Naive thymus-derived CD4-positive, alpha-beta T cell (primary cell): ENCODE measurements at regions of chr5 and their contacts with region 1.

Region 1: DNA sequence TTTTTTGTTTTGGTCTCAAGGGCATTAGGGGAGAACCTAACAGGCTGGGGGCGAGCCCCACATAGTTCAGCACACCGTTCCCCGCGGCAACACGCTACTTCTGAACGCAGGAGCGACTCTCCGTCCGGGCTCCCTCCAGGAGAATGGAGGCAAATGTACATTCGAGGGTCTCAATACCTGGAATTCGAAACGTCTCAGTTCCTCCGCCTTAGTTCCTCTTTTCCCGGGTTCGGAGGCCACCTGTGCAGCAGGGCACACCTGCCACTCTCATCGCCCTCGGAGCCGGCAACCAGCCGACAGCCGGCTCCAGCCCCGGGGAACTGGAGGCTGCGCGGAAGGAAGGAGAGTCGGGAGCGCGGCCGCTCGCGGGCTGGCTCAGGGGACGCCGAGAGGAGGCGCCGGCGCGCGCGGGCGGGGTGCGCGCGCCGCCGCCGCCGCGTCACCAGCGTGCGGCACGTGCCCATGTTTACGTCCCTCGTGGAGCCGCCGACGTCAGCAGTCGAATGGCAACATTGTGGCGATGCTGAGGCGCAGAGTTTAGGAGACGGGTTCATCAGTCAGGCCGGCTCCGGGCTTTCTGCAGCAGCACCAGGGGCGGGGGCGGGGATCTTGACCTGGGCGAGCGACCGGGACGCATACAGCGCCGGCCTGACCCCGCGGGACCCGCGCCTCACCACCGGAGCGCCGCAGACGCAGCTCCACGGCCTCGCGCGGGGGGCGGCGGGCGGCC is at the start of gene JMY:
- DNase-seq: peak; percentile 73 to 89 (median 84)
- ATAC-seq: peak; percentile 89
- H3K4me3 ChIP-seq: peak within 1 kb of the TSS; percentile 95
- H3K4me3 Mint-ChIP-seq: peak within 1 kb of the TSS; percentile 86 to 97 (median 94)
- H3K27ac ChIP-seq: peak within 1 kb of the TSS; percentile 99
- H3K27ac Mint-ChIP-seq: peak within 1 kb of the TSS; percentile 83 to 98 (median 93)
- H3K4me1 ChIP-seq: peaks cover 6 to 35% of the 10 kb centered on the region in 2 donors
- H3K4me1 Mint-ChIP-seq: peaks cover 15 to 35% (median 29%) of the 10 kb centered on the region in 7 donors
- H3K27me3 ChIP-seq: no peaks in the 10 kb centered on the region
- H3K27me3 Mint-ChIP-seq: peaks cover 0 to 4% (median 0%) of the 10 kb centered on the region in 5 donors
- total RNA-seq, gene JMY: 6.5 to 47.0 (median 24.2) TPM

Region 2: GRCh38 chr5:77775790-77776553 is 1459.8 kb before region 1 on chr5 and contains the start of gene TBCA:
- CTCF ChIA-PET with region 1: no interaction called
- POLR2A ChIA-PET with region 1: no interaction called
- intact Hi-C with region 1: loop called (anchors 5 kb)
- DNase-seq: peak; percentile 87 to 94 (median 93)
- ATAC-seq: peak; percentile 92
- H3K4me3 ChIP-seq: peak within 1 kb of the TSS; percentile 72
- H3K4me3 Mint-ChIP-seq: peak within 1 kb of the TSS; percentile 90 to 99 (median 94)
- H3K27ac ChIP-seq: peak within 1 kb of the TSS; percentile 97
- H3K27ac Mint-ChIP-seq: peak within 1 kb of the TSS; percentile 96 to 98 (median 97)
- H3K4me1 ChIP-seq: peaks cover 13 to 26% of the 10 kb centered on the region in 2 donors
- H3K4me1 Mint-ChIP-seq: peaks cover 32 to 60% (median 49%) of the 10 kb centered on the region in 7 donors
- H3K27me3 ChIP-seq: no peaks in the 10 kb centered on the region
- H3K27me3 Mint-ChIP-seq: no peaks in the 10 kb centered on the region
- total RNA-seq, gene TBCA: 71.3 to 137 (median 89.3) TPM

Region 3: DNA sequence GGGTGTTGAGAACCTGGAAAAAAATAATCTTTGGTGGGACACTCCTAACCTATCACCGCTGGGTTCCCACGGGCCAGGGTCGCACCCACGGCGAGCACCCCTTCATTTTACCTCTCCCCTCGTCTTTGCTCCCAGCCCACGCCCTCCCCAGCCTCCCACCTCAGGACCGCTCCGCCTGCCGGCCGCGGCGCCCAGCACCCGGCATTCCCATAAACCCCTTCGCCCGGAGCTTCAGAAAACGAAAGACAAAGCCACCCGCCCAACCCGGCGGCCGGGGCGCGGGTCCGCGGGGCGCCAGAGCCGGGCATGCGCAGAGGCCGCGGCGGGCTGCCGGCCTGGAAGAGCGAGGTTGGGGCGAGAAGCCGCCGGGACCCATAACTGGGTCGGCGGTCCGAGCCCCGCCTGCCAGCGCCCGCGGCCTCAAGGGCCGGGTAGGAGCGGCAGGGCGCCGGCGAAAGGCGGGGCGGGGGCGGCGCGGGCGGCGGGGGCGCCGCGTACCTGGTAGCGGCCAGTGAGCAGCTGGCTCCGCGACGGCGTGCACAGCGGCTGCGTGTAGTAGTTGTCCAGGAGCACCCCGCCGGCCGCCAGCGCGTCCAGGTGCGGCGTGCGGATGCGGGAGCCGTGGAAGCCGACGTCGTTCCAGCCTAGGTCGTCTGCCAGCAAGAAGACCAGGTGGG is 251.2 kb before region 1 on chr5:
- CTCF ChIA-PET with region 1: no interaction called
- POLR2A ChIA-PET with region 1: interaction called, 15 read pairs
- intact Hi-C with region 1: loop called (anchors 1 to 2 kb)
- DNase-seq: peak; percentile 62 to 87 (median 67)
- ATAC-seq: peak; percentile 81
- H3K4me3 ChIP-seq: peak overlapping the region; percentile 79
- H3K4me3 Mint-ChIP-seq: peak overlapping the region; percentile 87 to 98 (median 92)
- H3K27ac ChIP-seq: peak overlapping the region; percentile 76
- H3K27ac Mint-ChIP-seq: peak overlapping the region; percentile 75 to 98 (median 91)
- H3K4me1 ChIP-seq: peaks cover 5 to 13% of the 10 kb centered on the region in 2 donors
- H3K4me1 Mint-ChIP-seq: peaks cover 15 to 30% (median 26%) of the 10 kb centered on the region in 7 donors
- H3K27me3 ChIP-seq: no peaks in the 10 kb centered on the region
- H3K27me3 Mint-ChIP-seq: no peaks in the 10 kb centered on the region

Region 4: GRCh38 chr5:79205965-79206364 is 29.8 kb before region 1 on chr5:
- CTCF ChIA-PET with region 1: no interaction called
- POLR2A ChIA-PET with region 1: no interaction called
- intact Hi-C with region 1: no loop called
- DNase-seq: no peak
- ATAC-seq: no peak
- H3K4me3 ChIP-seq: no peak overlapping the region
- H3K4me3 Mint-ChIP-seq: no peak overlapping the region
- H3K27ac ChIP-seq: no peak overlapping the region
- H3K27ac Mint-ChIP-seq: no peak overlapping the region
- H3K4me1 ChIP-seq: no peaks in the 10 kb centered on the region
- H3K4me1 Mint-ChIP-seq: no peaks in the 10 kb centered on the region
- H3K27me3 ChIP-seq: no peaks in the 10 kb centered on the region
- H3K27me3 Mint-ChIP-seq: no peaks in the 10 kb centered on the region

Region 5: GRCh38 chr5:79225026-79225425 is 10.8 kb before region 1 on chr5:
- CTCF ChIA-PET with region 1: no interaction called
- POLR2A ChIA-PET with region 1: no interaction called
- intact Hi-C with region 1: no loop called
- DNase-seq: no peak
- ATAC-seq: no peak
- H3K4me3 ChIP-seq: no peak overlapping the region
- H3K4me3 Mint-ChIP-seq: no peak overlapping the region
- H3K27ac ChIP-seq: no peak overlapping the region
- H3K27ac Mint-ChIP-seq: peak overlapping the region in 1 of 9 donors; percentile 37
- H3K4me1 ChIP-seq: no peaks in the 10 kb centered on the region
- H3K4me1 Mint-ChIP-seq: peaks cover 0 to 8% (median 0%) of the 10 kb centered on the region in 7 donors
- H3K27me3 ChIP-seq: no peaks in the 10 kb centered on the region
- H3K27me3 Mint-ChIP-seq: no peaks in the 10 kb centered on the region

Region 6: DNA sequence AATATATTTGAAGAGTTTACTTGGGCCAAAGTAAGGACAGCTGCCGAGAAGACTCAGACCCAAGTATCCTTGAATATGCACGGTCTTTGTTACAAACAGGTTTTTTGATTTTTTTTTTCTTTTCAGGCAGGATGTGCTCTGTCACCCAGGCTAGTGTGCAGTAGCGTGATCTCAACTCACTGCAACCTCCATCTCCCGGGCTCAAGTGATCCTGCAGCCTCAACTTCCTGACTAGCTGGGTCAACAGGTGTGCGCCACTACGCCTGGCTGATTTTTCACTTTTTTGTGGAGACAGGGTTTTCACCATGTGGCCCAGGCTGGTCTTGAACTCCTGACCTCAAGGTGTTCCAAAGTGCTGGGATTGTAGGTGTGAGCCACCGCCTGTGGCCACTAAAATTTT is 27.5 kb after region 1 on chr5:
- CTCF ChIA-PET with region 1: no interaction called
- POLR2A ChIA-PET with region 1: no interaction called
- intact Hi-C with region 1: loop called in 1 of 2 experiments (anchors 2 kb)
- DNase-seq: peak in 5 of 9 donors; percentile 13 to 28 (median 20)
- ATAC-seq: peak; percentile 19
- H3K4me3 ChIP-seq: no peak overlapping the region
- H3K4me3 Mint-ChIP-seq: peak overlapping the region in 7 of 10 donors; percentile 16 to 69 (median 47)
- H3K27ac ChIP-seq: no peak overlapping the region
- H3K27ac Mint-ChIP-seq: peak overlapping the region in 4 of 9 donors; percentile 9 to 25 (median 20)
- H3K4me1 ChIP-seq: peaks cover 3 to 19% of the 10 kb centered on the region in 2 donors
- H3K4me1 Mint-ChIP-seq: peaks cover 12 to 81% (median 50%) of the 10 kb centered on the region in 7 donors
- H3K27me3 ChIP-seq: no peaks in the 10 kb centered on the region
- H3K27me3 Mint-ChIP-seq: no peaks in the 10 kb centered on the region

Region 7: GRCh38 chr5:79386679-79387078 is 150.9 kb after region 1 on chr5:
- CTCF ChIA-PET with region 1: no interaction called
- POLR2A ChIA-PET with region 1: no interaction called
- intact Hi-C with region 1: no loop called
- DNase-seq: no peak
- ATAC-seq: no peak
- H3K4me3 ChIP-seq: no peak overlapping the region
- H3K4me3 Mint-ChIP-seq: no peak overlapping the region
- H3K27ac ChIP-seq: no peak overlapping the region
- H3K27ac Mint-ChIP-seq: no peak overlapping the region
- H3K4me1 ChIP-seq: no peaks in the 10 kb centered on the region
- H3K4me1 Mint-ChIP-seq: peaks cover 0 to 2% (median 0%) of the 10 kb centered on the region in 7 donors
- H3K27me3 ChIP-seq: no peaks in the 10 kb centered on the region
- H3K27me3 Mint-ChIP-seq: peaks cover 0 to 3% (median 0%) of the 10 kb centered on the region in 5 donors

Region 8: GRCh38 chr5:79529110-79529509 is 293.3 kb after region 1 on chr5:
- CTCF ChIA-PET with region 1: no interaction called
- POLR2A ChIA-PET with region 1: no interaction called
- intact Hi-C with region 1: no loop called
- DNase-seq: no peak
- ATAC-seq: no peak
- H3K4me3 ChIP-seq: no peak overlapping the region
- H3K4me3 Mint-ChIP-seq: no peak overlapping the region
- H3K27ac ChIP-seq: no peak overlapping the region
- H3K27ac Mint-ChIP-seq: no peak overlapping the region
- H3K4me1 ChIP-seq: no peaks in the 10 kb centered on the region
- H3K4me1 Mint-ChIP-seq: no peaks in the 10 kb centered on the region
- H3K27me3 ChIP-seq: peaks cover 0 to 3% of the 10 kb centered on the region in 2 donors
- H3K27me3 Mint-ChIP-seq: peaks cover 0 to 13% (median 3%) of the 10 kb centered on the region in 5 donors

Region 9: GRCh38 chr5:79560771-79561524 is 325.1 kb after region 1 on chr5:
- CTCF ChIA-PET with region 1: no interaction called
- POLR2A ChIA-PET with region 1: no interaction called
- intact Hi-C with region 1: loop called in 1 of 2 experiments (anchors 5 kb)
- DNase-seq: peak in 1 of 9 donors; percentile 25
- ATAC-seq: no peak
- H3K4me3 ChIP-seq: no peak overlapping the region
- H3K4me3 Mint-ChIP-seq: peak overlapping the region in 1 of 10 donors; percentile 53
- H3K27ac ChIP-seq: no peak overlapping the region
- H3K27ac Mint-ChIP-seq: peak overlapping the region in 1 of 9 donors; percentile 93
- H3K4me1 ChIP-seq: no peaks in the 10 kb centered on the region
- H3K4me1 Mint-ChIP-seq: peaks cover 0 to 43% (median 4%) of the 10 kb centered on the region in 7 donors
- H3K27me3 ChIP-seq: no peaks in the 10 kb centered on the region
- H3K27me3 Mint-ChIP-seq: peaks cover 0 to 5% (median 0%) of the 10 kb centered on the region in 5 donors

Region 10: DNA sequence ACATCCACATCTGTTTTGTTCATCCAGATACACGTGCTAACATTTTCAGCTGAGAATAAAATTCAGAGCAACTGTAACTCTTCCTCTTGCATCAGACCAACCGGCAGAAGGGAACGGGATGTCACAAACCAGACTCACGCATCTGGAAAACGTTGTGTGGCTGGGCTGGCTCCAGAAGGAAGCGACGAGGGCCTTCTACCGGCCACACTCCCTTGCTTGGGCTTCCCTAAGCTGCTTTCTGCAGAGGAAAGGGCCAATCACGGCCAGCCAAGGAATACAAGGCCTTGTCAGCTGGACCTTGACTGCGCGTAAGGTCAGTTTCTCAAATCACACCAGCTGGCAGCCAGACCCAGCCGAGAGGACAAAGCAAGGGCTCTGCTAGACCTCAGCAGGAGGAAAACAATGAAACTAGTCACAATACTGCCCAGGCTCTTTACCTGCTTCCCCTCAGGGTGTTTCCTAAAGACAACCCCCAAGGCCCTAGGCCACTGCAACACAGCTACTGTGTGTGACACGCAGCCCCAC is 905.4 kb after region 1 on chr5:
- CTCF ChIA-PET with region 1: no interaction called
- POLR2A ChIA-PET with region 1: no interaction called
- intact Hi-C with region 1: loop called in 1 of 2 experiments (anchors 10 kb)
- DNase-seq: peak in 1 of 9 donors; percentile 18
- ATAC-seq: no peak
- H3K4me3 ChIP-seq: no peak overlapping the region
- H3K4me3 Mint-ChIP-seq: peak overlapping the region in 9 of 10 donors; percentile 27 to 66 (median 47)
- H3K27ac ChIP-seq: peak overlapping the region; percentile 64
- H3K27ac Mint-ChIP-seq: peak overlapping the region; percentile 83 to 95 (median 89)
- H3K4me1 ChIP-seq: peaks cover 37 to 75% of the 10 kb centered on the region in 2 donors
- H3K4me1 Mint-ChIP-seq: peaks cover 58 to 99% (median 75%) of the 10 kb centered on the region in 7 donors
- H3K27me3 ChIP-seq: no peaks in the 10 kb centered on the region
- H3K27me3 Mint-ChIP-seq: no peaks in the 10 kb centered on the region

Region 11: DNA sequence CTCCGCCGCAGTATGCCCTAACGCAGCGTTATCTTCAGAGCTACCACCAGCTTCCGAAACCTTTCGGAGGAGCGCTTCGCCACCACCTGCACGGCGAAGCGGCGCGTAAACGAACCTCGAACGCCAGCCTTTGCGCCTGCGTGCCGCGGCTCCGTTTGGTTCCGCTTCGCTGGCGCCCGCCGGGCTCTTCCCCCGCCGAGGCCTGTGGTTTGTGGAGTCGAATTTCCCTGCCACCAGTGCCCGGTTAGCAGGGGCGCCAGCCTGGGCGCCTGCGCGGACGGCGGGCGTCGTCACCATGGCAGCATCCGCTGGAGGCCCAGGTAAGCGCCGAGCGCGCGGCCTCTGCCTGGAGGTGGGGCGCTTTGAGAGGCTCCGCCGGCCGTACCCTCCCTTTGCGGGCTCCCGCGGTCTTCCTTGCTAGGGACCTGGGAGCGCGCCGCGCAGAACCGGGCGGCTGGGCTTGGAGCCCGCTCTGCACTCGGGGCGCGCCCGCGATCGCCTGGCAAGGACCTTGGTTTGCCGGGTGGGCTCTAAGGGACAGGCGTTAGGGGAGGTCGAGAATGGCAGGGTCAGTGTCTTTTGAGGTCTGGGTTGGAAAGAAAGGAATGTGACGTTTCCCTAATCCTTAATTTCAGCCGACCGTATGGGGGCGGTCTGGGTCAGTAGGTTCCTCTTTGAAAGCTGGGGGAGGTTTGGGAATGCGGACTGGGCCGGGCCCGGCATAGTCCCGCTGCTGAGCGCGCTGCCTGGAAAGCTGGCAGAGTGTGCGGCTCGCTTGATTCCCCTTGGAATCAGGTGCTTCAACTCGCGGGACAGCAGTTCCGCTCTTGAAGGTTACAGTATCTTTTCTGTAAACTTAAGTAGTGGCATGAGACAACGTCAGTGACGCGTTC is 1252.3 kb after region 1 on chr5 and contains the start of gene FAM151B:
- CTCF ChIA-PET with region 1: no interaction called
- POLR2A ChIA-PET with region 1: no interaction called
- intact Hi-C with region 1: loop called in 1 of 2 experiments (anchors 5 kb)
- DNase-seq: peak; percentile 58 to 86 (median 79)
- ATAC-seq: peak; percentile 90
- H3K4me3 ChIP-seq: peak within 1 kb of the TSS; percentile 71
- H3K4me3 Mint-ChIP-seq: peak within 1 kb of the TSS; percentile 83 to 92 (median 88)
- H3K27ac ChIP-seq: peak within 1 kb of the TSS; percentile 52
- H3K27ac Mint-ChIP-seq: peak within 1 kb of the TSS; percentile 47 to 88 (median 72)
- H3K4me1 ChIP-seq: peaks cover 0 to 7% of the 10 kb centered on the region in 2 donors
- H3K4me1 Mint-ChIP-seq: peaks cover 9 to 27% (median 14%) of the 10 kb centered on the region in 7 donors
- H3K27me3 ChIP-seq: no peaks in the 10 kb centered on the region
- H3K27me3 Mint-ChIP-seq: peaks cover 0 to 36% (median 7%) of the 10 kb centered on the region in 5 donors
- total RNA-seq, gene FAM151B: 0.36 to 3.4 (median 1.1) TPM in 4 of 5 experiments, not detected in the other